ENCODE measurements at regions of chr3 and their contacts with region 1.

Region 1: DNA sequence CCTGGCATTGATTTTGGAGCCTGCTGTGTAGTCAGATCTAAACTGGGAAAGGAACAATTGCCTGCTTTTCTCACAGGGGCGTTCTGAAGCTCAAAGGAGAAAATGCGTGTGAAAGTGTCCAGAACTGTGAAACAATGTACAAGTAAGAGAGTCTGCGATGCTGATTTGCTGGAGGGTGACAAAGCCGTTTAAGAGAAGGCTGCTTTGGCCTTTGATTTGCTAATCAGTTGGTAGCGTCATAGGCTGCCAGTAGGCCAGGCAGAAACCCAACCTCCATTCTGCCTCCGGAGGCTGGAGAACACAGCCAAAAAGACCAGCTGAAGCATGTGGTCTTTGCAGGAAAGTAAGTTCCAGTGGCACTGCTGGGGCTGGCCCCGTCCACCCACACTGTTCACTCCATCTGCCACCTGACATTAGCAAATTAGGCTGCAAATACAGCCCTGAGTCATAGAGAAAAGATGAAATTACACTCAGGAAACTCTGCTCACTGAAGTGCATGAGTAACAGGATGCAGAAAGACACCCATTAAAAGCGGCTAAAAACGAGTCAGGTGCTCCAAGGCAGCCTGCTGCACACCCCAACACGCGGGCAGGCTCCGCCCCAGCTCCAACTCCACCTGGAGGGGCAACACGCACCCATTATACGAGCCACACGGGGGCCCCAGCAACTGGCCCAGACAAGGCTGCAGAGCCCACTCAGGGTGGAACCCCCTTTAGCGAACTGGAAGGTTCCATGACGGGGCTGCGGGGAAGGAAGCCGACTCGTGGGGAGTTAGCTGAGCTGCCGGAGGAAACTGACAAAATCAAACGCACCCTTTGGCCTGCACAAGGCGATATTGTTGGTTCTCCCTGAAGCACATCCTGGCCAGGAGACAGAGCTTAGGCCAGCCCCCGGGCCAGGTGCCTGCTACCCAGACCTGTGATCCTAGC is 31.6 kb downstream of the ZDHHC19 start:
- DNase-seq: peak; percentile 91
- H3K4me3 ChIP-seq: peak overlapping the region; percentile 11 to 18 (median 17)
- H3K27ac ChIP-seq: peak overlapping the region; percentile 50
- H3K4me1 ChIP-seq: peaks cover 21% of the 10 kb centered on the region
- H3K27me3 ChIP-seq: no peaks in the 10 kb centered on the region
- CTCF ChIP-seq: no peak

Region 2: GRCh38 chr3:196081791-196082618 is 97.6 kb before region 1 on chr3 and contains the start of gene TFRC:
- CTCF ChIA-PET with region 1: no interaction called
- dilution Hi-C with region 1: loop called (anchors 5 kb)
- in situ Hi-C with region 1: loop called in 1 of 2 experiments (anchors 5 kb)
- intact Hi-C with region 1: loop called (anchors 5 kb)
- DNase-seq: peak; percentile 90
- H3K4me3 ChIP-seq: peak within 1 kb of the TSS; percentile 68 to 97 (median 78)
- H3K27ac ChIP-seq: peak within 1 kb of the TSS; percentile 81
- H3K4me1 ChIP-seq: peaks cover 24% of the 10 kb centered on the region
- H3K27me3 ChIP-seq: no peaks in the 10 kb centered on the region
- CTCF ChIP-seq: no peak
- total RNA-seq, gene TFRC: 252 to 547 TPM

Region 3: DNA sequence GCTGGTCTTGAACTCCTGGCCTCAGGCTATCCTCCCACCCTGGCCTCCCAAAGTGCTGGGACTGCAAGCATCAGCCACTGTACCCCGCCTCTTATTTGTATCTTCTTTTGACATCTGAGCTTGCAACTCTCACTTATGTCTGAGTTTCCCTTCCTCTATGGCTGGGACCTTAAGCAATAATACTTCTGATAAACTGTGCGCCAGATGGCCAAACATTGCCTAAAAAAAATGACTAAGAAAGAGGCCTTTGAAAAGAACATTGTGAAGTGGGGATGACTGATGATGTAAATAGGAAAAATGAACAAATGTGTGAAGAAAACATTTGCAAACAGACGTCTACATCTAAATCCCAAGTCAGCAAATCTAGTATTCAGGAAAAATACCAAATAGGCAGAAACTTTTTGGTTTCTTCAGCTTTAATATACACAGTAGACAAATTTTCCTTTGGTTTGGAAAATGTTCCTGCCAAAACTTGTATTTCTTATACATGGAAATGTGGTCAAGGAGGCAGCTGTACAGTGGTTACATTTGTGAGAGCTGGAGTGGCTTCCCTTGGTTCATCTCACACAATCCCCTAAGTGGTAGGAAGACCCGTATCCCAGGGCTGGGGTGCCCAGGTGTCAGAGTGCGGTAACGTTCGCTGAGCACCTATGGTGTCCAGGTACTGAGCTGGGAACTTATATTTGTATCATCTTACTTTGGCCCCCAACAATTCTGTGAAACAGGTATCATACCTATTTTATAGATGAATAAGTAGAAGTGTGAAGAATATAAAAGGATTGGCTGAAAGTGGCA is 86.1 kb before region 1 on chr3:
- CTCF ChIA-PET with region 1: no interaction called
- dilution Hi-C with region 1: no loop called
- in situ Hi-C with region 1: no loop called
- intact Hi-C with region 1: no loop called
- DNase-seq: no peak
- H3K4me3 ChIP-seq: no peak overlapping the region
- H3K27ac ChIP-seq: no peak overlapping the region
- H3K4me1 ChIP-seq: no peaks in the 10 kb centered on the region
- H3K27me3 ChIP-seq: no peaks in the 10 kb centered on the region
- CTCF ChIP-seq: no peak

Region 4: GRCh38 chr3:196108083-196108743 is 71.4 kb before region 1 on chr3:
- CTCF ChIA-PET with region 1: no interaction called
- dilution Hi-C with region 1: loop called (anchors 5 kb)
- in situ Hi-C with region 1: no loop called
- intact Hi-C with region 1: no loop called
- DNase-seq: no peak
- H3K4me3 ChIP-seq: no peak overlapping the region
- H3K27ac ChIP-seq: no peak overlapping the region
- H3K4me1 ChIP-seq: no peaks in the 10 kb centered on the region
- H3K27me3 ChIP-seq: no peaks in the 10 kb centered on the region
- CTCF ChIP-seq: no peak

Region 5: DNA sequence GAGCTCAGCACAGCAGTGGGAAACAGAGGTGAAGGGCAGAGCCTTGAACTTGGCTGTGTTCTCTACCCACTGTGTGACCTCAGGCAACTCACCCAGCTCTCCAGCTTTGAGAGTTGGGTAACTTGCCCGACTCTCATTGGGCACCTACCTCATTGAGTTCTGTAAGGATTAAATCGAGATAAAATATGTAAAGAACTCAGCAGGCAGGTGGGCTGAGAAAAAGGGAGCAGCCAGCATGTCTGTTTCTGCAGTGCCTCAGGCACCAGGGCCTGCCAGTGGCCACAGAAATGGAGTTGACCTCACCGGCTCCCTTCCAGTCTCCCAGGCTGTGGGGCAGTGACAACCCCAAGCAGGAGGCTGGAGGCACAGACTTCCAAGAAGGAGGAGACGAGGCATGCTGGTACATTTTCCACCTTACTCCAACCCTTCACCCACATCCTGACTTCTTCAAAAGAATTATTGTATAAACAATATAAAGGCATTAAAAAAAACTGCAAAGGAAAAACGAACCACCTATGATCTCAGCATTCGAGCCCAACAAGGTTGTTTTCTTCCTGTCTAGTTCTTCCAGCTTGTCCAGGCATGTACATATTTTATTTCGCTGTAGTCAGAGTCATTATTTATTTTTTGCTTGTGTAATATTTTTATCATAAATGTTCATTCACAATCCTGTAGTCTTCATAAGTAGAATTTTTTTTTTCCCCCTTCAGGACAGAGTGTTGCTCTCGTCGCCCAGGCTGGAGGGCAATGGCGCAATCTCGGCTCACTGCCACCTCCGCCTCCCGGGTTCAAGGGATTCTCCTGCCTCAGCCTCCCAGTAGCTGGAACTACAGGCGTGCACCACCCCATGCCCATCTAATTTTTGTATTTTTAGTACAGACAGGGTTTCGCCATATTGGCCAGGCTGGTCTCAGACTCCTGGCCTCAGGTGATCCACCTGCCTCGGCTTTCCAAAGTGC is 43.3 kb before region 1 on chr3:
- CTCF ChIA-PET with region 1: no interaction called
- dilution Hi-C with region 1: no loop called
- in situ Hi-C with region 1: no loop called
- intact Hi-C with region 1: loop called (anchors 2 kb)
- DNase-seq: peak; percentile 97
- H3K4me3 ChIP-seq: peak overlapping the region in 2 of 3 experiments; percentile 17
- H3K27ac ChIP-seq: peak overlapping the region; percentile 66
- H3K4me1 ChIP-seq: peaks cover 39% of the 10 kb centered on the region
- H3K27me3 ChIP-seq: no peaks in the 10 kb centered on the region
- CTCF ChIP-seq: no peak

Region 6: DNA sequence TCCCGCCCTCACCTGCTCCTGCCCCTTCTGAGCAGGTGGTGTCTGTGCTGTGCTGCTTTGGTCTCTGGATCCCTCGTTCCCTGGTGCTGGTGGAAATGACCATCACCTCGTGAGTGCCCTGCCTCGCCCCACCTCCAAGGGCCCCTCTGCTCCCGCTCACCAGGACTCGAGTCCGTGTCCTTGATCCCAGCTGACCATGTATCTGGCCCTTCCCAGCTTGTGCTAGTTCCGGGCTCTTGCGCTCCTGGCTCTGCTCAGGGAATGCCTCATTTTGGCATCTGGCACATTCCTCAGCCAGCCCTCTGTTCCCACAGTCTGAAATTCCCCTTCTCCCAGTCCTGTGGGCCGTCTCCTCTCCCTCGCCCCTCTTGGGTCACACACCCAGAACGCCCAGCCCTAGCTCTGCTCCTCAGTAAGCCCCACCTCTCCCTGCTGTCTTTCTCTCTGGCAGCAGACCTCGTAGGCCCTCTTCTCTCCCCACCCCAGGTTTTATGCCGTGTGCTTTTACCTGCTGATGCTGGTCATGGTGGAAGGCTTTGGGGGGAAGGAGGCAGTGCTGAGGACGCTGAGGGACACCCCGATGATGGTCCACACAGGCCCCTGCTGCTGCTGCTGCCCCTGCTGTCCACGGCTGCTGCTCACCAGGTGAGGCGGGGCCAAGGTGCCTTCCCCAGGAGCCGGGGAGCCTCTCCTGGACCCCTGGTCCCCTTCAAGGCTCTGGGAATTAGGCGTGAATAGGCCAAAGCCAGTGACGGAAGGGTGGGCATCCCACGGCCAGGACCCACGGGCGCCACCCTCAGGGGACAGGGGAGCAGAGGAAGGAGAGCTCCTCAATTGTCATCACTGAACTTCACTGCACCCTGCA is 48.2 kb after region 1 on chr3:
- CTCF ChIA-PET with region 1: no interaction called
- dilution Hi-C with region 1: no loop called
- in situ Hi-C with region 1: no loop called
- intact Hi-C with region 1: no loop called
- DNase-seq: no peak
- H3K4me3 ChIP-seq: no peak overlapping the region
- H3K27ac ChIP-seq: no peak overlapping the region
- H3K4me1 ChIP-seq: no peaks in the 10 kb centered on the region
- H3K27me3 ChIP-seq: no peaks in the 10 kb centered on the region
- CTCF ChIP-seq: no peak

Measured in mammary epithelial cell (primary cell).